ENCODE measurements at regions of chr1 and their contacts with region 1.

Region 1: GRCh38 chr1:84944767-84945486 is 51.9 kb upstream of the LPAR3 start:
- DNase-seq: peak; percentile 84
- ATAC-seq: peak; percentile 94
- H3K4me3 Mint-ChIP-seq: peak overlapping the region; percentile 76
- H3K27ac Mint-ChIP-seq: peak overlapping the region; percentile 95
- H3K4me1 Mint-ChIP-seq: peaks cover 16% of the 10 kb centered on the region
- H3K27me3 Mint-ChIP-seq: no peaks in the 10 kb centered on the region
- CTCF ChIP-seq: peak; percentile 95

Region 2: DNA sequence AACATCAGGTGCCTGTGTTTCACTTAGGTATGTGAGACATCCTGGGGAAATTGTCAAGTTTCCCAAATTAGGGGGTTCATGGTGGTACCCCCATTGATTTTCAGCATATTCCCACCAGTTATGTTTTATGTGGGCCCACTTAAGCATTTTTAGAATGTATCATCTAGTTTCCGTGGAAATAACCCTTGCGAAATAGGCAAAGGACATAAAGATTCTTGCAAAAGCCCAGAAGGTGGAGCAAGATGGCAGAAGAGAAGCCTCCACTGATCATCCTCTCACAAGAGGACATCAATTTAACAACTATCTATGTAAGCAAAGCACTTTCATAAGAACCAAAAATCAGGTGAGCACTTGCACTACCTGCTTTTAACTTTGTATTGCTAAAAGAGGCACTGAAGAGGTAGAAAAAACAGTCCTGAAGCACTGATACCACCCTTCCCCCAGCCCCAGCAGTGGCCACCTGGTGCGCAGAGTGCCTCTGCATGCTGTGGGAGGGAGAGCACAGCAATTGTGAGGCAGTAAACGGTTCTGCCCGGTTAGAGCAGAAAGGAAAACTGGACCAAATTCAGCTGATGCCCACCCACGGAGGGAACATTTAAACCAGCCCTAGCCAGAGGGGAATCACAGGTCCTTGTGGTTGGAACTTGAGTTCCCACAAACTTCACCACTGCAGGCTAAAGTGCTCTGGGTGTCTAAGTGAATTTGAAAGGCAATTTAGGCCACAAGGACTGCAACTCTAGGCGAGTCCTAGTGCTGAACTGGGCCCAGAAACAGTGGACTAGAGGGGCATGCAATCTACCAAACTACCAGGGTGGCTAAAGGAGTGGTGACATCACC is 28.8 kb after region 1 on chr1:
- CTCF ChIA-PET with region 1: interaction called, 24 read pairs
- POLR2A ChIA-PET with region 1: no interaction called
- intact Hi-C with region 1: loop called (anchors 1 kb)
- DNase-seq: peak; percentile 34
- ATAC-seq: no peak
- H3K4me3 Mint-ChIP-seq: no peak overlapping the region
- H3K27ac Mint-ChIP-seq: peak overlapping the region; percentile 51
- H3K4me1 Mint-ChIP-seq: peaks cover 56% of the 10 kb centered on the region
- H3K27me3 Mint-ChIP-seq: peaks cover 4% of the 10 kb centered on the region
- CTCF ChIP-seq: no peak

Region 3: DNA sequence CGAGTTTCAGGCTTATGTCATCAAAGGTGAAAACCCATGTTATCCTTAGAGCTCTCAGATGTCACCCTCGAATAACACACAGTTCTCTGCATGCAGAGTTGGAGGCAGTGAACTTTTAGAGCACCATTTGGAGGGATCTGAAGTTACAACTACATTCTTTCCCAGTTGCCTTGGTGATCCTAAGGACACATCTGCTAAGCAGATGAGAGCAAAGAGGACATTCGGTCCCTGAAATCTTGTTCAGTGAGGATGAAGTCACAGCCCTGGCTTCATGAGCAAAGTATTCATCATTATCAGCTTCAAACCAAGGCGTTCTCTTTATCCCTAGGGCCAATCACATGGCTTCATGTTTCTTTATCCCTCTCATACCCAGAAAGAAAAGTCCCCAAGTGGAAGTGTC is 75.1 kb after region 1 on chr1:
- CTCF ChIA-PET with region 1: interaction called, 133 read pairs
- POLR2A ChIA-PET with region 1: no interaction called
- intact Hi-C with region 1: no loop called
- DNase-seq: no peak
- ATAC-seq: no peak
- H3K4me3 Mint-ChIP-seq: no peak overlapping the region
- H3K27ac Mint-ChIP-seq: no peak overlapping the region
- H3K4me1 Mint-ChIP-seq: no peaks in the 10 kb centered on the region
- H3K27me3 Mint-ChIP-seq: peaks cover 1% of the 10 kb centered on the region
- CTCF ChIP-seq: no peak

Region 4: DNA sequence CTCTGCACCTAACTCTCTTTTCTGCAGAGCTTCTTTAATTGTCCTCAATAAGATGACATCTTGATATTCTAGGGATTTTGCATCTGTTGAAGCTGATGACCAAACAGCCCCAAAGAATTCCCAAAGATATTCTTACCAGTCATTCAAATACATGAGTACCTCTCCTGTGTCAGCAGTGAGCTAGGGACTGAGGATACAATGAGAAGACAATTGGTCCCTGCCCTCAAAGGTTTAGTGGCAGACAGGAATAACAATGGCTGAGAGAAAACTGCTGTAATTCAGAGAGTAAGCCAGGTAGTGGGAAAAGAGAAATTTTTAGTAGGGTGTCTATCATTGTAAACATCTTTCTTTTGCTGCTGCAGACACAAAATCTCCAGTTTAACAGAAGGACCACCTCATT is 97.5 kb after region 1 on chr1:
- CTCF ChIA-PET with region 1: interaction called, 16 read pairs
- POLR2A ChIA-PET with region 1: no interaction called
- intact Hi-C with region 1: no loop called
- DNase-seq: no peak
- ATAC-seq: no peak
- H3K4me3 Mint-ChIP-seq: no peak overlapping the region
- H3K27ac Mint-ChIP-seq: no peak overlapping the region
- H3K4me1 Mint-ChIP-seq: no peaks in the 10 kb centered on the region
- H3K27me3 Mint-ChIP-seq: peaks cover 33% of the 10 kb centered on the region
- CTCF ChIP-seq: no peak

Region 5: DNA sequence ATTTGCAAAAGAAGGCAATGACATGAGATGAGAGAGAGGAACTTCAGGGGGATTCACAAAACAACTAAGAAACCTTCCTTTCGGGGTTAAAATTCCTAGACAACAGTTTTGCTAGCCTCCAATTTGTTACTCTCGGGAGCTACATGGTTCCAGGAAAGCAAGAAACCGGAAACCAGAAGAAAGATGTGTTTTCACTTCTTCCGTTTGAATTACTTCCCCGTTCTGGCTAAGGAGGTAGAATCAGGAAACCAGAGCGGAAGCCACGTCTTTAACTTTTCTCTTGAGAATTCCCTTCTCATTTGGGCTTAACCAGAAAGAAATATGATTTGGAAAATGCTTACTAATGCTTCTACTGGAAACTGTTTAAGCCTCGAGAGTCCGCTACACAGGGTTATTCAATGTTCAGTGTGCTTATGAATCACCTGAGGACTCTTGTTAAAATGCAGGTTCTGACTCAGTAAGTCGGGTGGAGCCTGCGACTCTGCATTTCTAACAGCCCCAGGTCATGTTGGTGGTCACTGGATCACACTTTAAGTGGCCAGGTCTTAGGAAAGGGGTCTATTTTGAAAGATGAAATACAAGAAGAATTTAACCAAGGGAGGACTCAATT is 146.8 kb after region 1 on chr1:
- CTCF ChIA-PET with region 1: interaction called, 10 read pairs
- POLR2A ChIA-PET with region 1: no interaction called
- intact Hi-C with region 1: loop called (anchors 10 kb)
- DNase-seq: peak; percentile 32
- ATAC-seq: peak; percentile 85
- H3K4me3 Mint-ChIP-seq: peak overlapping the region; percentile 36
- H3K27ac Mint-ChIP-seq: no peak overlapping the region
- H3K4me1 Mint-ChIP-seq: peaks cover 4% of the 10 kb centered on the region
- H3K27me3 Mint-ChIP-seq: peaks cover 7% of the 10 kb centered on the region
- CTCF ChIP-seq: no peak

Region 6: GRCh38 chr1:85240174-85240601 is 295.3 kb after region 1 on chr1:
- CTCF ChIA-PET with region 1: interaction called, 16 read pairs
- POLR2A ChIA-PET with region 1: no interaction called
- intact Hi-C with region 1: no loop called
- DNase-seq: peak; percentile 46
- ATAC-seq: peak; percentile 84
- H3K4me3 Mint-ChIP-seq: no peak overlapping the region
- H3K27ac Mint-ChIP-seq: peak overlapping the region; percentile 48
- H3K4me1 Mint-ChIP-seq: peaks cover 13% of the 10 kb centered on the region
- H3K27me3 Mint-ChIP-seq: no peaks in the 10 kb centered on the region
- CTCF ChIP-seq: peak; percentile 46

Measured in activated CD8-positive, alpha-beta T cell treated with anti-CD3 and anti-CD28 coated beads for 36 hours (primary cell).